Naive thymus-derived CD4-positive, alpha-beta T cell (primary cell): ENCODE measurements at regions of chr12 and their contacts with region 1.

Region 1: DNA sequence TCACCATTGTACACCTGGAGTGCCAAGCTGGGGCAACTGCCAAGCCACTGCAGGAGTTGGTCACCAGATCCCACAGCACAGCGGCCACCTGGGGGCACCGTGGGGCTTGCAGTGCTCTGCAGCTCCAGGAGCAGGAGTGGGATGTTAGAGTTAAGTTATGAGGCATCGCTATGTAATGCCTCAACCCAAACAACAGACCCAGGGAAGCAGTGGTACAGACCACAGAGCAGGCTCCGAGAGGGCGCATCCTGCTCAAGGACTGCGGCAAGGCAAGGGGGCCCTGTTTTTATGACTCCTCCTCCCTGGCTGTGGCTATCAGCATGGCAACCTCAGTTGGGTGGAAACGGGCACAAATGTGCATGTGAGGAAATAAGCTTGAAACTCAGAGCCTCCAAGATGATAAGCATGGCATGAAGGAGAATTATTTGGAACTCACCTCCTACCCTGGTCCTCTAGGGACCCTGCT is 63.1 kb downstream of the ARL6IP4 start:
- DNase-seq: peak; percentile 36 to 83 (median 71)
- ATAC-seq: peak; percentile 92
- H3K4me3 ChIP-seq: no peak overlapping the region
- H3K4me3 Mint-ChIP-seq: peak overlapping the region in 9 of 10 donors; percentile 13 to 69 (median 56)
- H3K27ac ChIP-seq: peak overlapping the region; percentile 38
- H3K27ac Mint-ChIP-seq: peak overlapping the region; percentile 40 to 95 (median 84)
- H3K4me1 ChIP-seq: peaks cover 10 to 17% of the 10 kb centered on the region in 2 donors
- H3K4me1 Mint-ChIP-seq: peaks cover 27 to 65% (median 52%) of the 10 kb centered on the region in 7 donors
- H3K27me3 ChIP-seq: no peaks in the 10 kb centered on the region
- H3K27me3 Mint-ChIP-seq: no peaks in the 10 kb centered on the region

Region 2: GRCh38 chr12:122459211-122459610 is 584.4 kb before region 1 on chr12:
- CTCF ChIA-PET with region 1: no interaction called
- POLR2A ChIA-PET with region 1: no interaction called
- intact Hi-C with region 1: no loop called
- DNase-seq: no peak
- ATAC-seq: no peak
- H3K4me3 ChIP-seq: no peak overlapping the region
- H3K4me3 Mint-ChIP-seq: no peak overlapping the region
- H3K27ac ChIP-seq: no peak overlapping the region
- H3K27ac Mint-ChIP-seq: no peak overlapping the region
- H3K4me1 ChIP-seq: peaks cover under 1 to 5% of the 10 kb centered on the region in 2 donors
- H3K4me1 Mint-ChIP-seq: peaks cover 4 to 28% (median 9%) of the 10 kb centered on the region in 7 donors
- H3K27me3 ChIP-seq: no peaks in the 10 kb centered on the region
- H3K27me3 Mint-ChIP-seq: no peaks in the 10 kb centered on the region

Region 3: DNA sequence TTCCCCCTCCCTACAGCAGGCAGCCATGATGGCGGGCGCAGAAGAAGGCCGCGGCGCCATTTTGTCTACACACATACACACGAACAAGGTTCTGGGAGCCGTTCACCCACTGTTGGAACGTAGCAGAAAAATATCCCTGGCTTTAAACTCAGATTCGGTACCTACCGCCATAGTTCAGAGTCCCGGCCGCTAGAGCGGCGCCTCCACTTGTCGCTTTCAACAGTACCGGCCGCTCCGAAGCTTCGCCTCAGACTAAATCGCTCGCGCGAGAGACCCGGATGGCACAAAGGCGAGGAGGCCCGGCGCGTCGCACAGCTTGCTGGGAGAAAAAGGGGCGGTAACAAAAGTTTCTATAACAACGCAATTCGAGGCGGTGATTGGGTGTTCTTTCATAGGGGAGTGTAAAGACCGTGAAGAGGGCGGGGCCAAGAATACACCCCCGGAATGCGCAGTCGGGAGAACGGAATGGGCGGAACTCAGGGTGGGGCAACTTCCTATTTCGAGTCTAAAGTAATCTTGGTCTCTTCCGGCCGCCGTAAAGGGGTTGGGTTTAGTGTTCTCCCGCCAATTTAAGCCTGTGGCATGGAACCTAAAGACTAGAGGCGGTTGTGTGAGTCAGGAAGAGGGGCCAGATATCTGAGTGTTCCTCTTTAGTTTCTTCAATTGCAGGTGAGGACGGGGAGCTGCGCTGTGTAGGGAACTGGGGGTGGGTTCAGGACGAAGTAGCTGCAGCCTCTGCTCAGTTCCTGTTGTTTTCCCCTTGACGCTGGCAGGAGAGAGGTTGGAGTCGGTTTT is 516.7 kb before region 1 on chr12 and contains the starts of genes KNTC1 and RSRC2:
- CTCF ChIA-PET with region 1: no interaction called
- POLR2A ChIA-PET with region 1: no interaction called
- intact Hi-C with region 1: no loop called
- DNase-seq: peak; percentile 87 to 99 (median 99)
- ATAC-seq: peak; percentile 96
- H3K4me3 ChIP-seq: peak within 1 kb of the TSS; percentile 86
- H3K4me3 Mint-ChIP-seq: no peak within 1 kb of the TSS
- H3K27ac ChIP-seq: peak within 1 kb of the TSS; percentile 94
- H3K27ac Mint-ChIP-seq: peak within 1 kb of the TSS in 1 of 9 donors; percentile 68
- H3K4me1 ChIP-seq: peaks cover 30 to 37% of the 10 kb centered on the region in 2 donors
- H3K4me1 Mint-ChIP-seq: peaks cover 24 to 41% (median 36%) of the 10 kb centered on the region in 7 donors
- H3K27me3 ChIP-seq: no peaks in the 10 kb centered on the region
- H3K27me3 Mint-ChIP-seq: no peaks in the 10 kb centered on the region
- total RNA-seq, gene KNTC1: 24.5 to 102 (median 31.0) TPM
- total RNA-seq, gene RSRC2: 89.7 to 249 (median 139) TPM

Region 4: DNA sequence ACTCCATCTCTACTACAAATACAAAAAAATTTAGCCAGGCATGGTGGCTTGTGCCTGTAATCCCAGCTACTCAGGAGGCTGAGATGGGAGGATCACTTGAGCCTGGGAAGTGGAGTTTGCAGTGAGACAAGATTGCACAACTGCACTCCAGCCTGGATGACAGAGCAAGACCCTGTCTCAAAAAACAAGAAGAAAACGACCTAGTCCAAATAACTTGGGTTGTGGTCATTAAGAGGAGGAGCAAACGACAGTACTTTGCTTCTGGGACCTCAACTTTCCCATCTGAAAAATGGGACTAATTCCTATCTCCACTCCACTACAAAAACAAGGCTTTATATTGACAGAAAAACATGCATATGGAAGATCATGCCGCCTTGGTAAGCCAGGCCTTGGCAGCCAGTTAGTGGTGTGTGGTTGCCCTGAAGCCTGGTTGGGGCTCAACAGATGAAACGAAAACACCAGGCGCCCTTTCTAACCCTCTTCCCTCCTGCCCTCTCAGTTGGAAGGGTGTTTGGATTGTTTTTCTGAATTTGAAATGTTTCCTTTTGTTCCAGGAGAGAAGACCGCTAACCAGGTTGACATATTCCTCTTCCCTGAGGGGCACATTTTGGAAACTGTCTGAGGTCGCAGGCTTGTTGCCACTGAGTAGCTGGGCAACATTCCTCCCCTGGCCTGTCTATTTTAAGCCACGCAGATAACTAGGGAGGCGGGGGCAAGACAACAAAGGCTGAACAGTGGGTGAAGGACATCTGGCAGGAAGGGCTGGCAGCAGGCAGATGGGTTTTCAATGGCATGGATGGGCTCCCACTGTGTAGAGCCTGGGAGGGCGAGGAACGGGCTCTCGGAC is 133.9 kb before region 1 on chr12:
- CTCF ChIA-PET with region 1: no interaction called
- POLR2A ChIA-PET with region 1: no interaction called
- intact Hi-C with region 1: no loop called
- DNase-seq: no peak
- ATAC-seq: no peak
- H3K4me3 ChIP-seq: no peak overlapping the region
- H3K4me3 Mint-ChIP-seq: no peak overlapping the region
- H3K27ac ChIP-seq: no peak overlapping the region
- H3K27ac Mint-ChIP-seq: peak overlapping the region in 3 of 9 donors; percentile 6 to 65 (median 26)
- H3K4me1 ChIP-seq: no peaks in the 10 kb centered on the region
- H3K4me1 Mint-ChIP-seq: peaks cover 0 to 4% (median 0%) of the 10 kb centered on the region in 7 donors
- H3K27me3 ChIP-seq: no peaks in the 10 kb centered on the region
- H3K27me3 Mint-ChIP-seq: peaks cover 0 to 17% (median 0%) of the 10 kb centered on the region in 5 donors

Region 5: GRCh38 chr12:123058980-123059379 is 15.4 kb after region 1 on chr12:
- CTCF ChIA-PET with region 1: interaction called, 3 read pairs
- POLR2A ChIA-PET with region 1: no interaction called
- intact Hi-C with region 1: loop called in 1 of 2 experiments (anchors 2 kb)
- DNase-seq: no peak
- ATAC-seq: no peak
- H3K4me3 ChIP-seq: no peak overlapping the region
- H3K4me3 Mint-ChIP-seq: no peak overlapping the region
- H3K27ac ChIP-seq: no peak overlapping the region
- H3K27ac Mint-ChIP-seq: peak overlapping the region in 4 of 9 donors; percentile 25 to 54 (median 30)
- H3K4me1 ChIP-seq: peaks cover 0 to 4% of the 10 kb centered on the region in 2 donors
- H3K4me1 Mint-ChIP-seq: peaks cover 20 to 53% (median 41%) of the 10 kb centered on the region in 7 donors
- H3K27me3 ChIP-seq: no peaks in the 10 kb centered on the region
- H3K27me3 Mint-ChIP-seq: no peaks in the 10 kb centered on the region

Region 6: DNA sequence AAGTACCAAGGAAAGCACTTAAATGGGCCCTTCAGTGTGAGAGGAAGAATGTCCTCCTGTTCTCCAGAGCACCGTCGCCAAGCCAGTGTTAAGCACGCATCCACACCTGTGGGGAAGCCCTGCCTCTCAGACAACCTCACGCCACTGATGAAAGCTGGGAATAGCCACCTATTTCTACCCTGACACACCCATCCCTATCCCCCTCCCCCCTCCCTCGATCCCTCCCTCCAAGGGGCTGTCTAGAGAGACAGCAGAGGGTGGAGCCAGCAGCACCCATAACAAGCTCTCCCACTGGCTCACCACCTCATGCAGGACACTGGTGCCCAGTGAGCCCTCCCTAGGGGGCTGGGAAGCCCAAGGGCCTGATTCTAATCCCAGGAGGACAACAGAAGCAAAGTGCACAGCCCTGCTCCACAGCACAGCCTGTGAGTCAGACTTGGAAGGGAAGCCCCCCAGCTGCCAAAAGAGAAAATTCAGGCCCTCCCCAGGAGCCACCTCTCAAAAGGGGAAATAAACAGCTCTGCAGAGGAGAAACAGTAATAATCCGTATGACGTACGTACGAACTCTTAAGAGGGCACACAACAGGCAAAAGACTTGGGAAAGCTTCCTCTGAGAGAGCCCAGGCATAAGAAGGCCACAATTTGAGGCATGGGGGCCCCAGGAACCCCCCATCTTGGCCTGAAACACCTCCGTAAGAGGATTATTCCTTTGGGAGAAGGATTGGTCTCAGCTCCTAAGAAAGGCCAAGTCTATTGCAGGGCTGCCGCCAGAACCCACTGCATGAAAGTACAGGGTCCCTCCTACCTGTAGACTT is 99.6 kb after region 1 on chr12:
- CTCF ChIA-PET with region 1: interaction called, 10 read pairs
- POLR2A ChIA-PET with region 1: interaction called, 3 read pairs
- intact Hi-C with region 1: no loop called
- DNase-seq: no peak
- ATAC-seq: peak; percentile 55
- H3K4me3 ChIP-seq: no peak overlapping the region
- H3K4me3 Mint-ChIP-seq: peak overlapping the region in 3 of 10 donors; percentile 13 to 25 (median 18)
- H3K27ac ChIP-seq: no peak overlapping the region
- H3K27ac Mint-ChIP-seq: peak overlapping the region in 7 of 9 donors; percentile 28 to 78 (median 53)
- H3K4me1 ChIP-seq: peaks cover 0 to 21% of the 10 kb centered on the region in 2 donors
- H3K4me1 Mint-ChIP-seq: peaks cover 19 to 77% (median 68%) of the 10 kb centered on the region in 7 donors
- H3K27me3 ChIP-seq: no peaks in the 10 kb centered on the region
- H3K27me3 Mint-ChIP-seq: peaks cover 0 to 2% (median 0%) of the 10 kb centered on the region in 5 donors